GM12878 (cell line): ENCODE measurements at regions of chr11 and their contacts with region 1.

Region 1: GRCh38 chr11:94602430-94603372 is 35.5 kb downstream of the PIWIL4 start:
- DNase-seq: peak; percentile 75
- ATAC-seq: peak; percentile 94
- H3K4me3 ChIP-seq: no peak overlapping the region
- H3K27ac ChIP-seq: peak overlapping the region; percentile 44; the same call in 1 of the 2 replicates
- H3K4me1 ChIP-seq: peaks cover 7% of the 10 kb centered on the region; the same call in 1 of the 2 replicates
- H3K27me3 ChIP-seq: no peaks in the 10 kb centered on the region
- CTCF ChIP-seq: peak; percentile 58 to 66 (median 66)
- EP300 ChIP-seq: peak; percentile 80 to 95; a peak in 2 of 4 replicates
- POLR2A ChIP-seq: no peak
- RAD21 ChIP-seq: peak; percentile 65

Region 2: DNA sequence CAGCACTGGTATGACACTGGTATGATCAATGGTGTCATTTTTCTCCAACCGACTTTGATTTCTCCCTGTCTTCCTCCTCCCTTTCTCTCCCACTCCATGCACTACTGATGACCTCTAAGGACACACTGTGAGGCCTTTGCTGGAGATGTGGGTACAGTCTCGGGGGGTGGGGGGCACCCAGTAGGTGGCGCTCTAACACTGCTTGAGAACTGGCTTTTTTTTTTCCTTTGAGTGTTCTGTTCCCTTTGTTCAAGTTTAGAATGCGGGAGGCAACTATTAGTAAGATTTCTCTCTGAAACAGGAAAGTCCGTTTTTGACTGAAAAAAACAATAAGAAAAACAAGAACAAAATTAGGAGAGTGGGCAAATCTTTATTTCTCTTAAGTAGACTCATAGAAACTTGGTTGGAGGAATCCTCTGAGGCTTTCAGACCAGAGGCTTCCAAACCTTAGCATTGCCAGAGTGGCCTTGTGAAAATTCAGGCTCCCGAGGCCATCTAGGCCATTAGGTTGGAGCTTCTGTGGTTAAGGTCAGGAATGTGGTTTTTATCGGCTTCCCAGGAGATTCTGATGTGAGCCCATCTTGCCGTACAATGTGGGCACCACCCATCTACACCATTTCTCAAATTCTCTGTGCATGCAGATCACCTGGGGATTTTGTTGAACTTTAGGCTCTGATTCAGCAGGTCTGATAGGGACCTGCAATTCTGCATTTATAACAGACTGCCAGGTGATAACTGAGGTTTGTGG is 430.8 kb before region 1 on chr11:
- CTCF ChIA-PET with region 1: no interaction called
- POLR2A ChIA-PET with region 1: no interaction called
- RAD21 ChIA-PET with region 1: no interaction called
- SMC1A ChIA-PET with region 1: no interaction called
- in situ Hi-C with region 1: no loop called
- intact Hi-C with region 1: loop called (anchors 5 kb)
- DNase-seq: no peak
- ATAC-seq: peak; percentile 91
- H3K4me3 ChIP-seq: no peak overlapping the region
- H3K27ac ChIP-seq: no peak overlapping the region
- H3K4me1 ChIP-seq: no peaks in the 10 kb centered on the region
- H3K27me3 ChIP-seq: no peaks in the 10 kb centered on the region
- CTCF ChIP-seq: peak; percentile 62 to 84 (median 79)
- EP300 ChIP-seq: no peak
- POLR2A ChIP-seq: no peak
- RAD21 ChIP-seq: peak; percentile 75

Region 3: GRCh38 chr11:94325681-94326080 is 277.0 kb before region 1 on chr11:
- CTCF ChIA-PET with region 1: interaction called, 3 read pairs
- POLR2A ChIA-PET with region 1: no interaction called
- RAD21 ChIA-PET with region 1: no interaction called
- SMC1A ChIA-PET with region 1: interaction called, 9 read pairs
- in situ Hi-C with region 1: loop called (anchors 10 kb)
- intact Hi-C with region 1: no loop called
- DNase-seq: peak; percentile 9
- ATAC-seq: peak; percentile 95
- H3K4me3 ChIP-seq: no peak overlapping the region
- H3K27ac ChIP-seq: no peak overlapping the region
- H3K4me1 ChIP-seq: no peaks in the 10 kb centered on the region
- H3K27me3 ChIP-seq: no peaks in the 10 kb centered on the region
- CTCF ChIP-seq: peak; percentile 76 to 83 (median 81)
- EP300 ChIP-seq: no peak
- POLR2A ChIP-seq: no peak
- RAD21 ChIP-seq: peak; percentile 86

Region 4: DNA sequence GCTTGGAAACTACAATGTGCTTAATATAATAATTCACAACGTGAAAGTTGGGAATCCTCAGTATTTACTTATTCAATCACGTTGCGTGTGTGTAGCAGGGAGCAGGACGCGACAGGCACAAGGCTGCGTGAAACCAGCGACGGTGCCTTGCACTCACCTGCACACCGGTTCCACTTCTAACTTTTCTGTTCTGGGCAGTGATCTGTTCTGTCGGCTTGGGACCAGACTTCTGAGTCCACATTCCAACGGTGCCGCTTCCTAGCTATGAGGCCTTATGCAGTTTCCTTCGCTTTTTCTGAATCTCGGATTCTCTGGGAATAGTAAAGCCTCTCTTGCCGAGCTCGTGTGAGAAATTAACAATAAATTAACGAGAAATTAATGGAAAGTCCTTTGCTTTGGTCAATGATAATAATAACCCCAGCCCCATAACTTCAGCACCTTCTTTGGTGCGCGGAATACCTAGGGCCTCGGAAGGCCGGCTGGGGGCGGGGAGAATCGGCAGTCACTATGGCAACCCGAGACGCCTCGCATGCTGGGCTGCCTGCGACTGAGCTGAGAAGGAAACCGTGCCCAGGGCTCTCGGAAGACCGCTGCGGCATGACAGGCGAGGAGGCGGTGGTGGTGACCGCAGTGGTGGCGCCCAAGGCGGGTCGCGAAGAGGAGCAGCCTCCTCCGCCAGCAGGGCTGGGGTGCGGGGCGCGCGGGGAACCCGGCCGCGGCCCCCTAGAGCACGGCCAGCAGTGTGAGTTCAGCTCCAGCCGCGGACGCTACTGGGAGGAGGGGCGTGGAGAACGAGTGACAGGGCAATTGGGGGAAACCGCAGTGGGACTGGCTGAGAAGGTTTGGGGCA is 90.5 kb before region 1 on chr11 and contains the start of gene C11orf97:
- CTCF ChIA-PET with region 1: interaction called, 337 read pairs
- POLR2A ChIA-PET with region 1: interaction called, 3 read pairs
- RAD21 ChIA-PET with region 1: interaction called, 121 read pairs
- SMC1A ChIA-PET with region 1: interaction called, 216 read pairs
- in situ Hi-C with region 1: no loop called
- intact Hi-C with region 1: no loop called
- DNase-seq: no peak
- ATAC-seq: peak; percentile 91
- H3K4me3 ChIP-seq: no peak within 1 kb of the TSS
- H3K27ac ChIP-seq: no peak within 1 kb of the TSS
- H3K4me1 ChIP-seq: no peaks in the 10 kb centered on the region
- H3K27me3 ChIP-seq: peaks cover 0 to 7% of the 10 kb centered on the region in 2 experiments; a peak in 1 of 4 replicates
- CTCF ChIP-seq: no peak
- EP300 ChIP-seq: no peak
- POLR2A ChIP-seq: no peak
- RAD21 ChIP-seq: no peak
- polyA plus RNA-seq, gene C11orf97: not detected

Region 5: DNA sequence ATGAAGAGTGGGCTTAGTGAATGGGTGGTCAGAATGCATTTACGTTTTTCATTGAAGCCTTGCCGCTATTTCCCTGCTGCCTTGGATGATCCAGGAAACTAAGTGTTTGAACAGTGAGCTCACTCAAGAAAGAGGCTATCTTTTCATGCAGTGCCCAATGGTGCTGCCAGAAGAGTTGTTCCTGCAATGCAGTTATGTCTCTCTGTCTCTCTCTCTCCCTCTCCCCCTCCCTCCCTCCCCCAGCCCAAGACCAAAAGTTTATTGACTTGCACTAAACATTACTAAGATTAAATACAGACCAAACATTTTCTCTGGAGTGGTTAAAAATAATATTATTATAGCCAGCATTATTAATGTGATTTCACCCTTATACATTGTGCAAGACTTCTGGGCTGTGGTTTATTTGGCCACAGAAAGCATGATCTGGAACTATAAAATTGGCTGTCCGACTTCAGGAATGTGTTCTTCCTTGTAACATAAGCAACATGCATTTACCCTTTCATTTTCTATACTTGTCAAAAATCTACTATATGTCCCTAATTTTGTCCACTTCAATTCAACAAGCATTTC is 65.6 kb before region 1 on chr11:
- CTCF ChIA-PET with region 1: interaction called, 10 read pairs
- POLR2A ChIA-PET with region 1: interaction called, 3 read pairs
- RAD21 ChIA-PET with region 1: interaction called, 4 read pairs
- SMC1A ChIA-PET with region 1: interaction called, 21 read pairs
- in situ Hi-C with region 1: no loop called
- intact Hi-C with region 1: no loop called
- DNase-seq: no peak
- ATAC-seq: no peak
- H3K4me3 ChIP-seq: no peak overlapping the region
- H3K27ac ChIP-seq: no peak overlapping the region
- H3K4me1 ChIP-seq: no peaks in the 10 kb centered on the region
- H3K27me3 ChIP-seq: no peaks in the 10 kb centered on the region
- CTCF ChIP-seq: no peak
- EP300 ChIP-seq: no peak
- POLR2A ChIP-seq: no peak
- RAD21 ChIP-seq: no peak

Region 6: DNA sequence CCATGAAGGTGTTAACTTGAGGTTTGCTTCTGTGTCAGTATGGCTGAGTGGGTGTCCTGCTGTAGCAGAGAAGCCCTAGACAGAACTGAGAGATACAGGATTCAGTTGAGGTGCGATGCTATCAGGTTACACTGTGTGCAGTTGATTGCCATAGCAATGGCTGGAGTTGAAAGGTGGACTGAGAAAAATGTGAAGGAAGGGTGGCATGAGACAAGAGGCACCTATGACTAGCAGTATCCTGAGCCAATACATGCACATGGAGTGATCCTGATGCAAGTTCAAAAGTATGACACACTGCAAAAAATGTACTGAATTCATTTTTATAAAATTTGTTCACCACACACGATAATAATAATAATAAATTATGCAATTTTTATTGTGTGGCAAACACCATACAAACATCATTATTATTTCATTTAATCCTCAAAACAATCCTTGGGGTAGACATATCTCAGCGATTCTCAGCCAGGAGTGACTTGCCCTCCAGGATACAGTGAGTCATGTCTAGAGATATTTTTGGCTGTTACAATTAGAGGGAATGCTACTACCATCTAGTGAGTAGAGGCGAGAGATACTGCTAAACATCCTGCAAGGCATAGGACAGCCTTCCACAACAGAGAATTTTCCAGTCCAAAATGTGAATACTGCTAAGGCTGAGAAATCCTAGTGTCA is 39.4 kb before region 1 on chr11:
- CTCF ChIA-PET with region 1: interaction called, 9 read pairs
- POLR2A ChIA-PET with region 1: interaction called, 3 read pairs
- RAD21 ChIA-PET with region 1: interaction called, 10 read pairs
- SMC1A ChIA-PET with region 1: interaction called, 12 read pairs
- in situ Hi-C with region 1: no loop called
- intact Hi-C with region 1: no loop called
- DNase-seq: no peak
- ATAC-seq: no peak
- H3K4me3 ChIP-seq: no peak overlapping the region
- H3K27ac ChIP-seq: no peak overlapping the region
- H3K4me1 ChIP-seq: no peaks in the 10 kb centered on the region
- H3K27me3 ChIP-seq: no peaks in the 10 kb centered on the region
- CTCF ChIP-seq: no peak
- EP300 ChIP-seq: no peak
- POLR2A ChIP-seq: no peak
- RAD21 ChIP-seq: no peak

Region 7: GRCh38 chr11:95715777-95716241 is 1113.1 kb after region 1 on chr11:
- CTCF ChIA-PET with region 1: no interaction called
- POLR2A ChIA-PET with region 1: no interaction called
- RAD21 ChIA-PET with region 1: no interaction called
- SMC1A ChIA-PET with region 1: no interaction called
- in situ Hi-C with region 1: no loop called
- intact Hi-C with region 1: loop called (anchors 10 kb)
- DNase-seq: peak; percentile 89
- ATAC-seq: peak; percentile 84
- H3K4me3 ChIP-seq: no peak overlapping the region
- H3K27ac ChIP-seq: no peak overlapping the region
- H3K4me1 ChIP-seq: peaks cover 26% of the 10 kb centered on the region
- H3K27me3 ChIP-seq: no peaks in the 10 kb centered on the region
- CTCF ChIP-seq: no peak
- EP300 ChIP-seq: peak; percentile 87 to 89; a peak in 3 of 4 replicates
- POLR2A ChIP-seq: no peak
- RAD21 ChIP-seq: no peak